Activated T-helper 2 cell treated with anti-CD3 and anti-CD28 coated beads, Interferon-gamma antibody, Interleukin-2, Interleukin-4, amounts not matched to agents 10 μg/mL and 5 μg/mL and 100 μg/mL, durations not matched to agents 14 hours and 24 hours and 36 hours (primary cell): ENCODE measurements at regions of chr15 and their contacts with region 1.

Region 1: DNA sequence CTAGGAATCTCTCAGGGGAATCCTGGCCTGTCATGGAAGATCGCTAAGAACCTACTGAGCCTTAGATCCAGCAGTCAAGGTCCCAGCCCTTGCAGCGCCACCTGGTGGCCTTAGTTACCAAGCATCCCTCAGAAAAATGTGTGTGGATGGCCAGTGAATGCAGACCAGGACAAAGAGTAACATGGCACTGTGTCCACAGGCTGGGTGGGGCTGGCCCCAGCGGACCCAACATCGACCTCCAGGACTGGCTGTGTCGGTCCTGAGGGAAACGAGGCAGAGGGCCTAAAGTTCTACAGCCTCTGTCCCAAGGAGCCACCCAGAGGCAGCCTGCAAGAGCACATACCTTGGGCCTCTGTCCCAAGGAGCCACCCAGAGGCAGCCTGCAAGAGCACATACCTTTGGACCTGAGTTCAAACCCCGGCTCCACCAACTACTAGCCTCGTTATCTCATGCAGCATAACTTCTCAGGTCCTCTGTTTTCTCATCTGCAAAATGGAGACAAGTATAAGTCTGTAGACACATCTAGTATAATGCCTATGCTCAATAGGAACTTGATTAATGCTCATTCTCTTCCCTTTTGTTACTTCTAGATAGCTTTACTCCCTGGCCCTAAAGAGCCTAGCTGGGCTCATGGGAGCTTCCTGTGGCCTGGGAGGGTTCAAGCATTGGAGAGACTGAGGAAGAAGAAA is 57.5 kb upstream of the HERC1 start:
- DNase-seq: peak; percentile 61
- H3K4me3 Mint-ChIP-seq: no peak overlapping the region
- H3K27ac Mint-ChIP-seq: no peak overlapping the region
- H3K4me1 Mint-ChIP-seq: peaks cover 43% of the 10 kb centered on the region
- H3K27me3 Mint-ChIP-seq: no peaks in the 10 kb centered on the region

Region 2: GRCh38 chr15:63610200-63610841 is 280.9 kb before region 1 on chr15:
- intact Hi-C with region 1: loop called (anchors 1 kb)
- DNase-seq: peak; percentile 74
- H3K4me3 Mint-ChIP-seq: peak overlapping the region; percentile 0
- H3K27ac Mint-ChIP-seq: peak overlapping the region; percentile 92
- H3K4me1 Mint-ChIP-seq: peaks cover 25% of the 10 kb centered on the region
- H3K27me3 Mint-ChIP-seq: no peaks in the 10 kb centered on the region

Region 3: GRCh38 chr15:63833021-63833696 is 58.1 kb before region 1 on chr15:
- intact Hi-C with region 1: loop called (anchors 2 kb)
- DNase-seq: peak; percentile 45
- H3K4me3 Mint-ChIP-seq: peak overlapping the region; percentile 90
- H3K27ac Mint-ChIP-seq: peak overlapping the region; percentile 77
- H3K4me1 Mint-ChIP-seq: peaks cover 38% of the 10 kb centered on the region
- H3K27me3 Mint-ChIP-seq: peaks cover 10% of the 10 kb centered on the region

Region 4: GRCh38 chr15:63939531-63940130 is 48.4 kb after region 1 on chr15:
- intact Hi-C with region 1: loop called (anchors 1 kb)
- DNase-seq: peak; percentile 10
- H3K4me3 Mint-ChIP-seq: no peak overlapping the region
- H3K27ac Mint-ChIP-seq: peak overlapping the region; percentile 76
- H3K4me1 Mint-ChIP-seq: peaks cover 32% of the 10 kb centered on the region
- H3K27me3 Mint-ChIP-seq: no peaks in the 10 kb centered on the region

Region 5: DNA sequence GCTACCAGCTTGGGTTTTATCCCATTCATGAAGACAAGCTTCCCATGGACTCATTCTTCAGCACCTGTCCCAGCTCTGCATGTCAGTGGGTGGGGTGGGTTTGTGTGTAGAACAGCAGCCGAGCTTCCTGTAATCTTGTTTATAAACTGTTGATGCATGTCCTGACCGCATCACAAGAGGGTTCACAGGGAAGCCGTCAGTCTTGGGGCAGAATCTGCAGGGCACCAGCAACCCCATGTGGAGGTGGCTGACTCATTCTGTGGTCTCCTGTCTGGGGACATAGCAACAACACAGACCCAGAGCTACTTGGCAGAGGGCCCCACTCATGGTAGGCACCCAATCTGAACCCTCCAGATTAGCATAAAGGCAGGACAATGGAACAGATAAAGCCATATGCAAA is 119.5 kb after region 1 on chr15:
- intact Hi-C with region 1: loop called (anchors 1 kb)
- DNase-seq: peak; percentile 80
- H3K4me3 Mint-ChIP-seq: peak overlapping the region; percentile 62
- H3K27ac Mint-ChIP-seq: peak overlapping the region; percentile 88
- H3K4me1 Mint-ChIP-seq: peaks cover 38% of the 10 kb centered on the region
- H3K27me3 Mint-ChIP-seq: no peaks in the 10 kb centered on the region

Region 6: GRCh38 chr15:64067564-64068030 is 176.4 kb after region 1 on chr15:
- intact Hi-C with region 1: loop called (anchors 1 kb)
- DNase-seq: peak; percentile 58
- H3K4me3 Mint-ChIP-seq: no peak overlapping the region
- H3K27ac Mint-ChIP-seq: no peak overlapping the region
- H3K4me1 Mint-ChIP-seq: peaks cover 10% of the 10 kb centered on the region
- H3K27me3 Mint-ChIP-seq: no peaks in the 10 kb centered on the region